ENCODE measurements at regions of chr17 and their contacts with region 1.

Region 1: GRCh38 chr17:42112552-42113176 is at the start of gene DHX58:
- DNase-seq: peak; percentile 92
- H3K4me3 ChIP-seq: peak within 1 kb of the TSS; percentile 73
- H3K27ac ChIP-seq: peak within 1 kb of the TSS; percentile 71
- H3K4me1 ChIP-seq: peaks cover 10% of the 10 kb centered on the region
- H3K27me3 ChIP-seq: no peaks in the 10 kb centered on the region
- total RNA-seq, gene DHX58: 2.5 and 11.6 TPM in 2 replicates

Region 2: GRCh38 chr17:41966463-41967140 is 146.1 kb before region 1 on chr17 and contains the start of gene CNP:
- in situ Hi-C with region 1: loop called (anchors 10 kb)
- DNase-seq: peak; percentile 98
- H3K4me3 ChIP-seq: peak within 1 kb of the TSS; percentile 88
- H3K27ac ChIP-seq: peak within 1 kb of the TSS; percentile 77
- H3K4me1 ChIP-seq: peaks cover 13% of the 10 kb centered on the region
- H3K27me3 ChIP-seq: no peaks in the 10 kb centered on the region
- total RNA-seq, gene CNP: 58.3 and 69.4 TPM in 2 replicates